OCI-LY7 (cell line): ENCODE measurements at regions of chr6 and their contacts with region 1.

Region 1: GRCh38 chr6:106421496-106421895 is 61.0 kb downstream of the CRYBG1 start:
- DNase-seq: no peak
- H3K4me3 ChIP-seq: no peak overlapping the region
- H3K27ac ChIP-seq: no peak overlapping the region
- H3K4me1 ChIP-seq: no peaks in the 10 kb centered on the region
- CTCF ChIP-seq: no peak

Region 2: DNA sequence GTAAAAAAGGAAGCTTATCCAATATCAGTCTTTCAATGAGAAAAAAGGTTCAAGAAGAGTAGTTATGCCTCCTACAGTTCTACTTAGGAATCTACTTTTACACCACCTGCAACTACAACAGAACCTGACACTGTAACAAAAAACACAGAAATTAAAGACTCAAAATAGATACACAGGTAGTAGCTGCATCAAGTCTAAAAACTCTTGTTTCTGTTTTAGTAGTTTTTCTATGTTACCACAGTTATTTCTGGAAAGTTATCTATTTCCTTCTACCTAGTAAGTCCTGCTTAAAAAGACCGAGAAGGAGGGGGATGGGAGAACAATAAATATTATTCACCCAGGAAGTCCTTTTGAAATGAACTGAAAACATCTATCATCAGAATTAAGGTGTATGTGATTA is 148.4 kb before region 1 on chr6:
- CTCF ChIA-PET with region 1: no interaction called
- POLR2A ChIA-PET with region 1: no interaction called
- intact Hi-C with region 1: no loop called
- DNase-seq: peak; percentile 7
- H3K4me3 ChIP-seq: no peak overlapping the region
- H3K27ac ChIP-seq: no peak overlapping the region
- H3K4me1 ChIP-seq: peaks cover 13% of the 10 kb centered on the region
- CTCF ChIP-seq: peak; percentile 33; the same call in 1 of the 2 replicates

Region 3: DNA sequence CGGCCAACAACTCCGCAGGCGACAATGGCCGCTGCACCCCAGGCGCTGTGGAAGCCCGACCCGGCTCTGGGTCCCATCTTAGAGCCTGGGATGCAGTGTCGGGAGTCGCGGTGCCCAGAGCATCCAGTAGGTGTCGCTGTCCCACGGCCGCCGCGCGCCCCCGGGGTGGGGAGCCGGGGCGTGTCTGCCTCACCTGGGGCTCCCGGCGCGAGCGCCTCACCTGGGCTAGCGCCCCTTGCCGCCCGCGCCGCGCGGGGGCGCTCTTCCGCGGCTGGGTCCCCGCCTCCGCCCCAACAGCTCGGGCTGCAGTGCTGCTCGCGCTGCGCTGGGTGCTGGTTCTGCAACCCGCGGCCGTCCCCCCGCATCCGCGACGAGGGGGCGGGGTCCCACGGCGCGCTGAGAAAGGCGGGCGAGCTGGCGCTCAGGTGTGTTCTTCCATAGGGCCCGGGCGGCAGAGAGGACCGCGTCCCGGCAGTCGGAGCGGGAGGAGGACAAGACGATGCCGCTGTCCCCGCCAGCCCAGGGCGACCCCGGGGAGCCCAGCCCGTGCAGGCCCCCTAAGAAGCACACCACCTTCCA is 61.0 kb before region 1 on chr6 and contains the start of gene CRYBG1:
- CTCF ChIA-PET with region 1: no interaction called
- POLR2A ChIA-PET with region 1: no interaction called
- intact Hi-C with region 1: loop called (anchors 10 kb)
- DNase-seq: peak; percentile 23
- H3K4me3 ChIP-seq: no peak within 1 kb of the TSS
- H3K27ac ChIP-seq: no peak within 1 kb of the TSS
- H3K4me1 ChIP-seq: no peaks in the 10 kb centered on the region
- CTCF ChIP-seq: peak; percentile 83
- total RNA-seq, gene CRYBG1: 41.7 and 44.7 TPM in 2 replicates